K562 (cell line): ENCODE measurements at regions of chr14 and their contacts with region 1.

Region 1: DNA sequence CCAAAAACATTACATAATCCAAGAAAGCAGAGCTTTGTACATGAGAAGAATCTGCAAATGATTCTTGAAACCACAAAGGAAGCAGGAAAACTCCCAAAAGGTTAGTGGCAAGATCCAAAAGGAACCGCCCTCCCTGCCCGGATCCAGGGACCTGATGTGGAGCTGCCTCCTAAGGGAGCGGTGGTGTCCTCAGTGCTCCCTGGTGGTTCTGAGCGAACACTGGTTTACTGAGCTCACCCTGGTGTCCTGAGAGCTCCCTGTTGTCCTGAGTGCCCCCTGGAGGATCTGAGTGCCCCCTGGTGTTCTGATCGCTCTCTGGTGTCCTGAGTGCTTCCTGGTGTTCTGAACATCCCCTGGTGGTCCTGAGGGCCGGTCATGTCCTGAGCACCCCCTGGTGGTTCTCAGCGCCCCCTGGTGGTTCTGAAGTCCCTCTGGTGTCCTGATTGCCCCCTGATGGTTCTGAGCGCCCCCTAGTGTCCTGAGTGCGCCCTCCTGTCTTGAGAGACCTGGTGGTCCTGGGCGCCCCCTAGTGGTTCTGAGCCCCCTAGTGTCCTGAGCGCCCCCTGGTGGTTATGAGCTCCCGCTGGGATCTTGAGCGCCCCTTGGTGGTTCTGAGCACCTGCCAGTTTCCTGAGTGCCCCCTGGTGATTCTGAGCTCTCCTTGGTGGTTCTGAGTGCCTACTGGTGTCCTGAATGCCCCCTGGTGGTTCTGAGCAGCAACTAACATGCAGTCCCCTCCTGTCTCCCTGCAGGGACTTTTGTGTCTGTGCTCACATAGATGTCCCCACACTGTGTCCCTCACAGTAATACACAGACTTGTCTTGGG is 891.1 kb downstream of the TMEM121 start:
- DNase-seq: peak; percentile 44 to 74 (median 64)
- ATAC-seq: peak; percentile 87
- H3K4me3 ChIP-seq: no peak overlapping the region
- H3K27ac ChIP-seq: no peak overlapping the region
- H3K4me1 ChIP-seq: no peaks in the 10 kb centered on the region
- H3K27me3 ChIP-seq: no peaks in the 10 kb centered on the region
- CTCF ChIP-seq: peak; percentile 98 to 99 (median 99)
- EP300 ChIP-seq: no peak
- POLR2A ChIP-seq: no peak
- RAD21 ChIP-seq: peak in 1 of 2 experiments; percentile 28; a peak in 2 of 4 replicates

Region 2: DNA sequence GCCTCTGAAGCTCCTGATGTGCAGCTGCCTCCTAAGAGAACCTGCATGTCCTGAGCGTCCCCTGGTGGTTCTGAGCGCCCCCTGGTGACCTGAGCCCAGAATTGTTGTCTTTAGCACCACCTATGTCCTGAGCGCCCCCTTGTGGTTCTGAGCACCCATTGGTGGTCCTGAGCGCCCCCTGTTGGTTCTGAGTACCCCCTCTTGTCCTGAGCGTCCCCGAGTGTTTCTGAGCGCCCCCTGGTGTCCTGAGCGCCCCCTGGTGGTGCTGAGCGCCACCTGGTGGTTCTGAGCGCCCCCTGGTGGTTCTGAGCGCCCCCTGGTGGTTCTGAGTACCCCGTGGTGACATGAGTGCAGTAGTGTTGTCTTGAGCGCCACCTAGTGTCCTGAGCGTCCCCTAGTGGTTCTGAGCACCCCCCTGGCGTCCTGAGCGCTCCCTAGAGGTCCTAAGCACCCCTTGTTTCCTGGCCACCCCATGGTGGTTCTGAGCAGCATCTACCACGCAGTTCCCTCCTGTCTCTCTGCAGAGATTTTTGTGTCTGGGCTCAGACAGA is 108.5 kb before region 1 on chr14:
- CTCF ChIA-PET with region 1: interaction called, 19 read pairs
- POLR2A ChIA-PET with region 1: no interaction called
- in situ Hi-C with region 1: no loop called
- intact Hi-C with region 1: no loop called
- DNase-seq: peak; percentile 37 to 65 (median 54)
- ATAC-seq: peak; percentile 89
- H3K4me3 ChIP-seq: no peak overlapping the region
- H3K27ac ChIP-seq: no peak overlapping the region
- H3K4me1 ChIP-seq: no peaks in the 10 kb centered on the region
- H3K27me3 ChIP-seq: no peaks in the 10 kb centered on the region
- CTCF ChIP-seq: peak; percentile 95 to 99 (median 97)
- EP300 ChIP-seq: no peak
- POLR2A ChIP-seq: no peak
- RAD21 ChIP-seq: no peak